CD8-positive, alpha-beta T cell (primary cell): ENCODE measurements at regions of chr1 and their contacts with region 1.

Region 1: DNA sequence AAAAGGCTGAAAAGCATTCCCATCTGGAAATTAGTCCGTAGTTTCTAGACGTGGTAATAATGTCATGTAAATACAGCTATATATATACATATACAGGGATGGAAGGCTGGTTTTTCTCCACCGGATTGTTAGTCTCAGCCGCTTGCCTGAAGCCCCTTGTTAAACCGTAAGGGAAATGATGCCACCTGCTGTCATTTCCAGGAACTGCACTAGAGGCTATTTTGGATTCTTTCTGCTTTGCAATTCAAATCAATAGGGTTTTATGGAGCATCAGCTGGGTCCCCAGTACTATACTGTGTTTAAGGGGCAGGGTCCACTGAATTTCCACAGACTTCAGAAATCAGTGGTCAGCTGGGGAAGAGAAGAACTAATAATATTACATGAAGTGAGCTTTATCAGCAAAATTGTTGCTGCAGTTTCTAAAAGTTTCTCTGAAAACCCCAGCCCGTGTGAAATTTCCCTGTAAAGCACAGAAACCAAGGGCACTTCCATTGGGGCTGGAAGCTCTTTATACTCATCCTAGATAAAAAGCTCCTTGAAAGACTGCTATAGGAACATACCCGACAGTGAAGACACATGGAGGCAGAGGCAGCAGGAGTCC is 33.8 kb upstream of the MPZL1 start:
- DNase-seq: peak; percentile 62 to 85 (median 82)
- ATAC-seq: peak; percentile 95
- H3K4me3 ChIP-seq: no peak overlapping the region
- H3K4me3 Mint-ChIP-seq: no peak overlapping the region
- H3K27ac ChIP-seq: no peak overlapping the region
- H3K27ac Mint-ChIP-seq: peak overlapping the region; percentile 67
- H3K4me1 ChIP-seq: peaks cover 5% of the 10 kb centered on the region
- H3K4me1 Mint-ChIP-seq: peaks cover 18% of the 10 kb centered on the region
- H3K27me3 ChIP-seq: no peaks in the 10 kb centered on the region
- H3K27me3 Mint-ChIP-seq: no peaks in the 10 kb centered on the region
- CTCF ChIP-seq: peak; percentile 99

Region 2: GRCh38 chr1:167563579-167564246 is 124.3 kb before region 1 on chr1:
- CTCF ChIA-PET with region 1: interaction called, 11 read pairs
- POLR2A ChIA-PET with region 1: no interaction called
- intact Hi-C with region 1: loop called in 1 of 2 experiments (anchors 5 kb)
- DNase-seq: no peak
- ATAC-seq: no peak
- H3K4me3 ChIP-seq: no peak overlapping the region
- H3K4me3 Mint-ChIP-seq: no peak overlapping the region
- H3K27ac ChIP-seq: no peak overlapping the region
- H3K27ac Mint-ChIP-seq: no peak overlapping the region
- H3K4me1 ChIP-seq: no peaks in the 10 kb centered on the region
- H3K4me1 Mint-ChIP-seq: no peaks in the 10 kb centered on the region
- H3K27me3 ChIP-seq: no peaks in the 10 kb centered on the region
- H3K27me3 Mint-ChIP-seq: no peaks in the 10 kb centered on the region
- CTCF ChIP-seq: no peak

Region 3: GRCh38 chr1:167599957-167600581 is 88.0 kb before region 1 on chr1:
- CTCF ChIA-PET with region 1: interaction called, 186 read pairs
- POLR2A ChIA-PET with region 1: interaction called, 22 read pairs
- intact Hi-C with region 1: loop called (anchors 1 kb)
- DNase-seq: peak in 6 of 9 experiments; percentile 32 to 81 (median 58)
- ATAC-seq: peak; percentile 88
- H3K4me3 ChIP-seq: no peak overlapping the region
- H3K4me3 Mint-ChIP-seq: peak overlapping the region; percentile 38
- H3K27ac ChIP-seq: no peak overlapping the region
- H3K27ac Mint-ChIP-seq: no peak overlapping the region
- H3K4me1 ChIP-seq: peaks cover 38% of the 10 kb centered on the region
- H3K4me1 Mint-ChIP-seq: peaks cover 42% of the 10 kb centered on the region
- H3K27me3 ChIP-seq: no peaks in the 10 kb centered on the region
- H3K27me3 Mint-ChIP-seq: no peaks in the 10 kb centered on the region
- CTCF ChIP-seq: peak; percentile 71

Region 4: GRCh38 chr1:167627865-167628641 is 60.0 kb before region 1 on chr1:
- CTCF ChIA-PET with region 1: interaction called, 34 read pairs
- POLR2A ChIA-PET with region 1: interaction called, 4 read pairs
- intact Hi-C with region 1: no loop called
- DNase-seq: peak; percentile 44 to 91 (median 73)
- ATAC-seq: peak; percentile 67
- H3K4me3 ChIP-seq: peak overlapping the region; percentile 28 to 96
- H3K4me3 Mint-ChIP-seq: peak overlapping the region; percentile 89
- H3K27ac ChIP-seq: peak overlapping the region; percentile 46 to 94
- H3K27ac Mint-ChIP-seq: peak overlapping the region; percentile 96
- H3K4me1 ChIP-seq: peaks cover 50% of the 10 kb centered on the region
- H3K4me1 Mint-ChIP-seq: peaks cover 63% of the 10 kb centered on the region
- H3K27me3 ChIP-seq: no peaks in the 10 kb centered on the region
- H3K27me3 Mint-ChIP-seq: no peaks in the 10 kb centered on the region
- CTCF ChIP-seq: no peak

Region 5: GRCh38 chr1:167650269-167651160 is 37.5 kb before region 1 on chr1:
- CTCF ChIA-PET with region 1: interaction called, 19 read pairs
- POLR2A ChIA-PET with region 1: interaction called, 3 read pairs
- intact Hi-C with region 1: loop called in 1 of 2 experiments (anchors 5 kb)
- DNase-seq: peak in 1 of 9 experiments; percentile 38
- ATAC-seq: no peak
- H3K4me3 ChIP-seq: peak overlapping the region in 1 of 2 experiments; percentile 18
- H3K4me3 Mint-ChIP-seq: peak overlapping the region; percentile 72
- H3K27ac ChIP-seq: peak overlapping the region in 1 of 2 experiments; percentile 76
- H3K27ac Mint-ChIP-seq: peak overlapping the region; percentile 91
- H3K4me1 ChIP-seq: peaks cover 81% of the 10 kb centered on the region
- H3K4me1 Mint-ChIP-seq: peaks cover 90% of the 10 kb centered on the region
- H3K27me3 ChIP-seq: no peaks in the 10 kb centered on the region
- H3K27me3 Mint-ChIP-seq: no peaks in the 10 kb centered on the region
- CTCF ChIP-seq: no peak

Region 6: GRCh38 chr1:167703557-167703956 is 15.5 kb after region 1 on chr1:
- CTCF ChIA-PET with region 1: interaction called, 11 read pairs
- POLR2A ChIA-PET with region 1: interaction called, 6 read pairs
- intact Hi-C with region 1: no loop called
- DNase-seq: peak in 1 of 9 experiments; percentile 36
- ATAC-seq: no peak
- H3K4me3 ChIP-seq: no peak overlapping the region
- H3K4me3 Mint-ChIP-seq: no peak overlapping the region
- H3K27ac ChIP-seq: no peak overlapping the region
- H3K27ac Mint-ChIP-seq: peak overlapping the region; percentile 87
- H3K4me1 ChIP-seq: no peaks in the 10 kb centered on the region
- H3K4me1 Mint-ChIP-seq: peaks cover 17% of the 10 kb centered on the region
- H3K27me3 ChIP-seq: no peaks in the 10 kb centered on the region
- H3K27me3 Mint-ChIP-seq: no peaks in the 10 kb centered on the region
- CTCF ChIP-seq: no peak